ENCODE measurements at regions of chr17 and their contacts with region 1.

Region 1: DNA sequence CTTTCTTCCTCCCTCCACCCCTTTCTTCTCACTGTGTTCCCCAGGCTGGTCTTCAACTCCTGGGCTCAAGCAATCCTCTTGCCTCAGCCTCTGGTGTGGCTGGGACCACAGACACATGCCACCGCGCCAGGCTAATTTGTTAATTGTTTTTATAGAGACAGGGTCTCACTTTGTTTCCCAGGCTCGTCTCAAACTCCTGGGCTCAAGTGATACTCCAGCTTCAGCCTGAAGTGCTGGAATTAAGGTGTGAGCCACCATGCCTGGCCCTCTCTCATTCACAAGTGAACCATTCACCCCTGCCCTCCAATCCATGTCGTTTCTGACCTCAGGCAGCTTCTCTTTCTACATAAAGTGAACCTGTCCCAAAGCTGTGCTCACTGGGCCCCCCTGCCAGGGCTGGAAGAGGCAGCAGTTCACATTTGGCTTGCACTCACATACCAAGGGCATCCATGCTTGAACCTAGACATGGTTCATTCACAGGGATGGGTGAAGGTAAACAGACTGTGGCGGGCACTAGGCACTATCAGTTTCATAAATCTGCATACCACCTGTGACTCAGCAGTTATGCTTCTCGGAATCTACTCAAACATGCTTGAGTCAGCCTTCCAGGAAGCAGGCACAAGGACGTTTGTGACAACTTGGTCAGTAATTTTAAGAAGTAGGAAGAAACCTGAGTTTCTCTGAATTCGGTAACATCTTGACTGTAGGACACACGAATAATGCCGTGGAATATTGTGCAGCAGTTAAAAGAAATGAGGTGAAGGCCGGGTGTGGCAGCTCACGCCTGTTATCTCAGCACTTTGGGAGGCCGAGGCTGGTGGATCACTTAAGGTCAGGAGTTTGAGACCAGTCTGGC is 6.0 kb upstream of the RNF213 start:
- DNase-seq: peak; percentile 71 to 85 (median 84)
- H3K4me3 ChIP-seq: peak overlapping the region in 1 of 3 experiments; percentile 65
- H3K4me3 Mint-ChIP-seq: peak overlapping the region; percentile 47 to 74
- H3K27ac ChIP-seq: peak overlapping the region; percentile 65 to 81
- H3K27ac Mint-ChIP-seq: peak overlapping the region; percentile 86 to 94 (median 91)
- H3K4me1 ChIP-seq: peaks cover 26 to 27% of the 10 kb centered on the region in 2 donors
- H3K4me1 Mint-ChIP-seq: peaks cover 39% of the 10 kb centered on the region
- H3K27me3 ChIP-seq: no peaks in the 10 kb centered on the region
- H3K27me3 Mint-ChIP-seq: peaks cover 5 to 27% (median 13%) of the 10 kb centered on the region in 3 donors
- CTCF ChIP-seq: no peak

Region 2: GRCh38 chr17:80195731-80196529 is 58.7 kb before region 1 on chr17:
- intact Hi-C with region 1: loop called (anchors 1 to 5 kb)
- DNase-seq: peak; percentile 33 to 63 (median 59)
- H3K4me3 ChIP-seq: no peak overlapping the region
- H3K4me3 Mint-ChIP-seq: no peak overlapping the region
- H3K27ac ChIP-seq: no peak overlapping the region
- H3K27ac Mint-ChIP-seq: peak overlapping the region in 2 of 7 donors; percentile 49 to 75
- H3K4me1 ChIP-seq: no peaks in the 10 kb centered on the region
- H3K4me1 Mint-ChIP-seq: no peaks in the 10 kb centered on the region
- H3K27me3 ChIP-seq: no peaks in the 10 kb centered on the region
- H3K27me3 Mint-ChIP-seq: peaks cover 11 to 29% (median 24%) of the 10 kb centered on the region in 3 donors
- CTCF ChIP-seq: peak; percentile 100

Region 3: DNA sequence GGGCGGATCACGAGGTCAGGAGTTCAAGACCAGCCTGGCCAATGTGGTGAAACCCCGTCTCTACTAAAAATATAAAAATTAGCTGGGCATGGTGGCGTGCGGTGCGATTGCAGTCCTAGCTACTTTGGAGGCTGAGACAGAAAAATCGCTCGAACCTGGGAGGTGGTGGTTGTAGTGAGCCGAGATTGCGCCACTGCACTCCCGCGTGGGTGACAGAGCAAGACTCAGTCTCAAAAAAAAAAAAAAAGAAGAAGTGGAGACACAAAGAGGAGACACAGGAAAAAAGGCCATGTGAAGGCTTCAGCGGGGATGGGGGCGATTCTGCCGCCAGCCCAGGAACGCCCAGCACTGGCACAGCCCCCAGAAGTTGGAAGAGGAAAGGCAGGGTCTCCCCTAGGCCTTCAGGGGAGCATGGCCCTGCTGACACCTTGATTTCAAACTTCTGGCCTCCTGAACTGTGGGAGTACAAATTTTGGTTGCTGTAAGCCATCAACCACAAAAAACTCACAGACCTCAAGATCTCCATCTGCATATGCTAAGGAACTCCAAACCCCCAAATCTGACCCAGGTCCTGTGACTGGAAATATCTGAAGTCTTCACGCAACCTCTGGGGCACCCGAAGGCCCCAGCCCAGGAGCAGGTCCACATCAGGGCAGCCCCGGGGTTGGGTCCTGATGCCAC is 41.5 kb before region 1 on chr17:
- intact Hi-C with region 1: loop called (anchors 5 kb)
- DNase-seq: peak; percentile 81 to 84 (median 83)
- H3K4me3 ChIP-seq: peak overlapping the region in 1 of 3 experiments; percentile 57
- H3K4me3 Mint-ChIP-seq: peak overlapping the region; percentile 53 to 65
- H3K27ac ChIP-seq: peak overlapping the region; percentile 85 to 91
- H3K27ac Mint-ChIP-seq: peak overlapping the region; percentile 88 to 96 (median 93)
- H3K4me1 ChIP-seq: peaks cover 34 to 51% of the 10 kb centered on the region in 2 donors
- H3K4me1 Mint-ChIP-seq: peaks cover 39% of the 10 kb centered on the region
- H3K27me3 ChIP-seq: peaks cover 0 to 2% of the 10 kb centered on the region in 2 donors
- H3K27me3 Mint-ChIP-seq: peaks cover 10 to 31% (median 25%) of the 10 kb centered on the region in 3 donors
- CTCF ChIP-seq: no peak

Region 4: GRCh38 chr17:80219013-80219762 is 35.4 kb before region 1 on chr17:
- intact Hi-C with region 1: loop called (anchors 5 kb)
- DNase-seq: peak; percentile 96 to 98 (median 98)
- H3K4me3 ChIP-seq: peak overlapping the region; percentile 58 to 95 (median 86)
- H3K4me3 Mint-ChIP-seq: peak overlapping the region; percentile 91 to 93
- H3K27ac ChIP-seq: peak overlapping the region; percentile 99
- H3K27ac Mint-ChIP-seq: peak overlapping the region; percentile 93 to 99 (median 97)
- H3K4me1 ChIP-seq: peaks cover 29 to 44% of the 10 kb centered on the region in 2 donors
- H3K4me1 Mint-ChIP-seq: peaks cover 35% of the 10 kb centered on the region
- H3K27me3 ChIP-seq: peaks cover 3 to 25% of the 10 kb centered on the region in 2 donors
- H3K27me3 Mint-ChIP-seq: peaks cover 34 to 63% (median 44%) of the 10 kb centered on the region in 3 donors
- CTCF ChIP-seq: no peak

Measured in CD14-positive monocyte (primary cell).